Heart right ventricle (tissue), 16 donors: ENCODE measurements at regions of chr2 and their contacts with region 1.

Region 1: DNA sequence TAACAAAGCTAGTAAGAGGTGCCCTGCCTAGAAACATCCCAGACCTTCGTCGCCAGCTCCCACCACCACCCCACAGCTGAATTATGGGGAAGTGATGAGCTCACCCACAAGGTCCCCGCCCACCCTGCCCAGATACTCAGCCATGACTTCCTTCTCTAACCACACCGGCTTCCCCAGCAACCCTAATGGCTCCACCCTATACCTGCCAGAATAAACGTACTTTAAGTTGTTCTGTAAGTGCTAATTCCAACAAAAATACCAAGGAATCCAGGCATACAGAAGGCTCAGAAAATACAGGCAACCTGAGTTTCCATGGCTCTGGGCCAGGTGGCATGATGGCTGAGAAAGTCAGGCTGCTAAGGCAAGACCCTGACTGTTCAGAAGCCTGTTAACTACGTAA is 39.1 kb downstream of the TMEM163 start:
- DNase-seq: no peak
- ATAC-seq: no peak
- H3K4me3 ChIP-seq: no peak overlapping the region
- H3K27ac ChIP-seq: no peak overlapping the region
- H3K4me1 ChIP-seq: peaks cover 0 to 44% (median 13%) of the 10 kb centered on the region in 9 donors
- H3K27me3 ChIP-seq: no peaks in the 10 kb centered on the region
- CTCF ChIP-seq: no peak

Region 2: GRCh38 chr2:134712736-134713135 is 33.0 kb after region 1 on chr2:
- intact Hi-C with region 1: loop called in 1 of 10 experiments (anchors 5 kb)
- DNase-seq: no peak
- ATAC-seq: no peak
- H3K4me3 ChIP-seq: no peak overlapping the region
- H3K27ac ChIP-seq: peak overlapping the region in 1 of 10 donors; percentile 38
- H3K4me1 ChIP-seq: peaks cover 0 to 32% (median 7%) of the 10 kb centered on the region in 9 donors
- H3K27me3 ChIP-seq: peaks cover 0 to 93% (median 69%) of the 10 kb centered on the region in 7 donors
- CTCF ChIP-seq: no peak